ENCODE measurements at regions of chr10 and their contacts with region 1.

Region 1: GRCh38 chr10:118754720-118755480 is at the start of gene CACUL1:
- DNase-seq: peak; percentile 100
- H3K4me3 ChIP-seq: peak within 1 kb of the TSS; percentile 55 to 96 (median 84)
- H3K27ac ChIP-seq: peak within 1 kb of the TSS; percentile 42
- H3K4me1 ChIP-seq: peaks cover 13% of the 10 kb centered on the region
- H3K27me3 ChIP-seq: peaks cover 0 to 2% of the 10 kb centered on the region in 2 experiments
- CTCF ChIP-seq: no peak
- POLR2A ChIP-seq: peak; percentile 74
- total RNA-seq, gene CACUL1: 35.1 and 38.6 TPM in 2 replicates

Region 2: GRCh38 chr10:117449636-117450035 is 1305.3 kb before region 1 on chr10:
- CTCF ChIA-PET with region 1: no interaction called
- POLR2A ChIA-PET with region 1: no interaction called
- dilution Hi-C with region 1: no loop called
- intact Hi-C with region 1: loop called (anchors 10 kb)
- DNase-seq: no peak
- H3K4me3 ChIP-seq: no peak overlapping the region
- H3K27ac ChIP-seq: no peak overlapping the region
- H3K4me1 ChIP-seq: peaks cover 4% of the 10 kb centered on the region
- H3K27me3 ChIP-seq: peaks cover 1 to 4% of the 10 kb centered on the region in 2 experiments
- CTCF ChIP-seq: peak in 1 of 2 donors; percentile 9
- POLR2A ChIP-seq: no peak

Region 3: GRCh38 chr10:118698421-118698820 is 56.5 kb before region 1 on chr10:
- CTCF ChIA-PET with region 1: no interaction called
- POLR2A ChIA-PET with region 1: no interaction called
- dilution Hi-C with region 1: no loop called
- intact Hi-C with region 1: loop called (anchors 1 kb)
- DNase-seq: peak; percentile 71
- H3K4me3 ChIP-seq: no peak overlapping the region
- H3K27ac ChIP-seq: no peak overlapping the region
- H3K4me1 ChIP-seq: peaks cover 13% of the 10 kb centered on the region
- H3K27me3 ChIP-seq: no peaks in the 10 kb centered on the region
- CTCF ChIP-seq: no peak
- POLR2A ChIP-seq: no peak

Region 4: GRCh38 chr10:118729641-118730258 is 25.1 kb before region 1 on chr10:
- CTCF ChIA-PET with region 1: interaction called, 4 read pairs
- POLR2A ChIA-PET with region 1: interaction called, 3 read pairs
- dilution Hi-C with region 1: no loop called
- intact Hi-C with region 1: loop called (anchors 1 kb)
- DNase-seq: peak; percentile 67
- H3K4me3 ChIP-seq: no peak overlapping the region
- H3K27ac ChIP-seq: peak overlapping the region; percentile 64
- H3K4me1 ChIP-seq: peaks cover 21% of the 10 kb centered on the region
- H3K27me3 ChIP-seq: no peaks in the 10 kb centered on the region
- CTCF ChIP-seq: no peak
- POLR2A ChIP-seq: no peak

Region 5: DNA sequence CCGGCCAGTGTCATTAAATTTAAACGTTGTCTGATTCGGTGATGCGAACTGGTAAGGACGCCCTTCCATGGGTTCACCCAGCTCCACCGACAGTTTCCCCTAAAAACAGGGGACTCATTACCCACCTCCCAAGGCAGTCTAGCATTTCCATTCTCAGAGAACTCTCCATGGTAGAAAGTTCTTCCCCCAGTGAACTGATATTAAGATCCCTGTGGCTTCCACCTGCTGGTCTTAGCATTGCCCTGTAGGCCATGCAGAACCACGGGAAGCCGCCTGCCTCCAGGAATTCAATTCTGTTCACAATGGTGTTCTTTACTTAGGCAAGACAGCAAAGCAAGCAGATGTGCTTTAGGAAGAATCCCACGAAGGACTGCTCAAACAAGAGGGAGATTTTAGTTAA is 145.7 kb after region 1 on chr10:
- CTCF ChIA-PET with region 1: no interaction called
- POLR2A ChIA-PET with region 1: no interaction called
- dilution Hi-C with region 1: no loop called
- intact Hi-C with region 1: no loop called
- DNase-seq: no peak
- H3K4me3 ChIP-seq: no peak overlapping the region
- H3K27ac ChIP-seq: no peak overlapping the region
- H3K4me1 ChIP-seq: no peaks in the 10 kb centered on the region
- H3K27me3 ChIP-seq: peaks cover 2 to 3% of the 10 kb centered on the region in 2 experiments
- CTCF ChIP-seq: no peak
- POLR2A ChIP-seq: no peak

Region 6: GRCh38 chr10:118911361-118911760 is 156.5 kb after region 1 on chr10:
- CTCF ChIA-PET with region 1: no interaction called
- POLR2A ChIA-PET with region 1: no interaction called
- dilution Hi-C with region 1: no loop called
- intact Hi-C with region 1: no loop called
- DNase-seq: peak; percentile 12
- H3K4me3 ChIP-seq: no peak overlapping the region
- H3K27ac ChIP-seq: no peak overlapping the region
- H3K4me1 ChIP-seq: peaks cover 3% of the 10 kb centered on the region
- H3K27me3 ChIP-seq: peaks cover 8% of the 10 kb centered on the region in 2 experiments
- CTCF ChIP-seq: no peak
- POLR2A ChIP-seq: no peak

Region 7: DNA sequence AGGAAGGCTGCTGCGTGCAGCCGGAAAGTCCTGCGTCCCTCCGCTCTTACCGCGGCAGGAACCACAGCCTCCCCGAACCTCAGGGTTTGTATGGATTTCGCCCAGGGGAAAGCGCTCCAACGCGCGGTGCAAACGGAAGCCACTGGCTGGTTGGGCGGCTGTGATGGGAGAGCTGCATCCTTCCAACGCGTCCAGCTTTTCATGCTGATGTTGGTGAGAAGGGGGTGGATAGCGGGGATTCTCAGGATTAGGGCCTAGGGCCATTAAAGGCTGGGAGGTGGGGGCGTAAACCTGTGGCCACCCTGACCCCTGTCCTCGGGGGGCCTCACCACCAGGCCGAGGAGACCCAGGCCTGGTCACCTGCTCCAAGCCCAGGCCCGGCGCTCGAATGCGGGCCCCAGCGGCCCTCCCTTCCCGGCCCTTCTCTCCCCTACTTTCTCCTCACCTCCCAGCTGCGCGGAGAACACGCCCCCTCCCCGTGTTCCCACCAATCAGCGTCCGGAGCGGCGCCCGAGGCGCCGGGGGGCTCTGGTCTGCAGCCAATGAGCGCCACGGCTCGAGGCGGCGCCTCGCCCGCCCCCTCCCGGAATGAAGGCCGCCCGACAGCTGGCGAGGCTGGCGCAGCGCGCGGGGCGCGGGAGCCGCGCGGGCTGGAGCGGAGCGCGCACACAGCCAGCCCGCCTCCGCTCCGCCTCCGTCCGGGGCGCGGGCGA is 274.2 kb after region 1 on chr10:
- CTCF ChIA-PET with region 1: interaction called, 3 read pairs
- POLR2A ChIA-PET with region 1: no interaction called
- dilution Hi-C with region 1: no loop called
- intact Hi-C with region 1: loop called (anchors 2 kb)
- DNase-seq: peak; percentile 87
- H3K4me3 ChIP-seq: peak overlapping the region in 1 of 3 experiments; percentile 37
- H3K27ac ChIP-seq: no peak overlapping the region
- H3K4me1 ChIP-seq: peaks cover 8% of the 10 kb centered on the region
- H3K27me3 ChIP-seq: no peaks in the 10 kb centered on the region
- CTCF ChIP-seq: peak; percentile 4 to 38
- POLR2A ChIP-seq: no peak

Region 8: DNA sequence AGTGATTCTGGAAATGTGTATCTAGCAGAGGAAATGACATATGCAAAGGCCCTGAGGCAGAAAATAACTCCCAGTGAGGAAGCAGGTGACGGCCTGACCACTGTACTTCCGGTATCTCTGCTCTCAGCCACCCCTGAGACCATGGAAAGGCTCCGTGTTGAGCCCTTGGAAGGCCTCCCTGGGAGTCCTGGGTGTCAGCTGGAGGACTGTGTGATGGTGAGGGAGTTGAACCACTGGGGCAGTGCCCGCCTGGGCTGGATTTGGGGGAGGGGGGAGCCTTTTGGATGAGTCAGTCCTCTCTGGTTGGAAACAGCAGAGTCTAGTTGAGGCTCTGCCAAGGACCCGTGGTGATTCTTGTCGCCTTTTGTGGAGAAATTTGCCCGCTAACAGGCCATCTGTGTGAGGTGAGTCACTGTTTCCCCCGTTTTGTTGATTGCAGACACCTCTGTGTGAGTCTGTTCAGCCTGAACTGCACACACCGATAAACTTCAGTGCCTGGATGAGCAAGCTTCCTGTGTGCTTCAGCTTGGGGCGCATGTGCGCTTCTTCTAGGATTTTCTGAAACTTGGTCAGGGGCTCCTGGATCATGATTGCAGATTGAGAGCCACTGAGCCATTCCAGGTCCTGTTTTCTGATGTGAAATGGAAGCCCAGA is 551.1 kb after region 1 on chr10:
- CTCF ChIA-PET with region 1: no interaction called
- POLR2A ChIA-PET with region 1: no interaction called
- dilution Hi-C with region 1: no loop called
- intact Hi-C with region 1: no loop called
- DNase-seq: peak; percentile 99
- H3K4me3 ChIP-seq: no peak overlapping the region
- H3K27ac ChIP-seq: peak overlapping the region; percentile 93
- H3K4me1 ChIP-seq: peaks cover 49% of the 10 kb centered on the region
- H3K27me3 ChIP-seq: no peaks in the 10 kb centered on the region
- CTCF ChIP-seq: no peak
- POLR2A ChIP-seq: peak; percentile 29